SK-N-SH (cell line): ENCODE measurements at regions of chr9 and their contacts with region 1.

Region 1: DNA sequence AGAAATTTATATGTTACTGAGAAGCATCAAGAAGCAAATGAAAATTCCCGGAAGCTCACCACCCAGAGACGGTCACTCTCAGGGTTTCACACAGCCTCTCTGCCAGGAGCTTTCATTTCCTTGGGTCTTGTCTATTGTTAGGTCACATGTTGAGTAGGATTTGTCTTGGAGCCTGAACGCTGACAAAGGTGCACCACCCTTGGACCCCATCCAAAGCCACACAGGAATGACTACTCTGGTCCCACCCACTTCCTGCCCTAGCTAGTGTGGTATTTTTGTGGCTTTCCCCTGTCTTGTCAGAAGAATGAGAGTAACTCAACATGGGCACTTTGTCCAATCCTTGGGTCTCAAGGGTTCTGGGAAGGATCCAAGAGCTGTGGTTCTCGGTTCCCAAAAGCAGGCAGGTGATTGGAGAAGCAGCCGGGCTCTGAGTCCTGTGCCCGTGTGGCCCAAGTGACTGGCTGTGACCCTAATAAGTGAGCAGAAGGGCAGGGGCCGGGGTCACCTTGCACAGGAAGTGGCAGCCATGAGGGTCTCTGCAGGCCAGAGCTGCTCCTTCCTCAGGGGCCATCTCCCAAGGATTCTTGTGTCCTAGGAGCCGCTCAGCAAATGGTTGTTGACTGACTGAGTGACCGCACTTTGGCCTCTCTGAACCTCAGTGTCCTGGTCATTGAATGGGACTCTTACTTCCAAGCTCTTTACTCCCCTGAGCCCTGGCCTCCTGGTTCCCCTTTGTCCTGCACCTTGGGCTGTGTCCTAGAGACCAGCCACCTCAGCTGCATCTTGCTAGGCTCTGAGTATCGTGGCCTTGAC is 6.9 kb downstream of the FGD3 start:
- DNase-seq: no peak
- H3K4me3 ChIP-seq: no peak overlapping the region
- H3K27ac ChIP-seq: no peak overlapping the region
- H3K4me1 ChIP-seq: peaks cover 0 to 12% of the 10 kb centered on the region in 2 experiments; a peak in 1 of 4 replicates
- H3K27me3 ChIP-seq: no peaks in the 10 kb centered on the region
- CTCF ChIP-seq: no peak
- EP300 ChIP-seq: no peak
- RAD21 ChIP-seq: no peak

Region 2: DNA sequence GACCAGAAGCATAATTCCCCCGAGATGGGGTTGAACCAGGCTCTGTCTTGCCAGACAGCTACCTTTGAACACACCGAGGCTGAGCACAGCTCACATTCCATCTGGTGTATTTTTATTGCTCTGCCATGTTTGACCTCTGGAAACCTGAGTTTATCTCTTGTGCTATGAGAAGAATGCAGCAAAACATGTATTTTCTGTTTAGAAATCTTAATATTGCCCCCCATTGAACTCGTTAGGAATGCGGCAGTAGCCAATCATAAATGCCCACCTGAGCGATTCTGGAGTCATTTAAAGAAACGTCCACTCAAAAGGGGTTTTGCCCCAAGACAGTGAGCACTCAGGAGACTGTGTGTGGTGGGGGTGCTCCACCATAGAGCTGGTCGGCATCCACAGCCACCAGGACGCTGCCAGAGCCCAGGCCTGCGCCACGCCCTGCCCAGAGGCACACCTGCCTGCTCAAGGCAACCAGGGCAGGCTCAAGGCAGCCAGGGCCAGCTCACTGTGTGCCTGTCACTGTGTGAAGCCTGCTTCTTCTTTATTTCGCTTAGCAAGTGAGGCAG is 20.0 kb after region 1 on chr9:
- CTCF ChIA-PET with region 1: interaction called, 13 read pairs
- POLR2A ChIA-PET with region 1: no interaction called
- DNase-seq: no peak
- H3K4me3 ChIP-seq: no peak overlapping the region
- H3K27ac ChIP-seq: no peak overlapping the region
- H3K4me1 ChIP-seq: no peaks in the 10 kb centered on the region; a peak in 1 of 4 replicates
- H3K27me3 ChIP-seq: no peaks in the 10 kb centered on the region
- CTCF ChIP-seq: no peak
- EP300 ChIP-seq: no peak
- RAD21 ChIP-seq: no peak